ENCODE measurements at regions of chr1 and their contacts with region 1.

Region 1: GRCh38 chr1:171485375-171486047 is at the start of gene PRRC2C:
- DNase-seq: peak; percentile 96
- H3K4me3 Mint-ChIP-seq: peak within 1 kb of the TSS; percentile 95
- H3K27ac Mint-ChIP-seq: peak within 1 kb of the TSS; percentile 100
- H3K4me1 Mint-ChIP-seq: peaks cover 51% of the 10 kb centered on the region
- H3K27me3 Mint-ChIP-seq: no peaks in the 10 kb centered on the region

Region 2: GRCh38 chr1:171470726-171471125 is 14.8 kb before region 1 on chr1:
- CTCF ChIA-PET with region 1: no interaction called
- DNase-seq: no peak
- H3K4me3 Mint-ChIP-seq: no peak overlapping the region
- H3K27ac Mint-ChIP-seq: no peak overlapping the region
- H3K4me1 Mint-ChIP-seq: no peaks in the 10 kb centered on the region
- H3K27me3 Mint-ChIP-seq: no peaks in the 10 kb centered on the region

Region 3: GRCh38 chr1:171515299-171515698 is 29.8 kb after region 1 on chr1:
- CTCF ChIA-PET with region 1: interaction called, 22 read pairs
- DNase-seq: no peak
- H3K4me3 Mint-ChIP-seq: no peak overlapping the region
- H3K27ac Mint-ChIP-seq: no peak overlapping the region
- H3K4me1 Mint-ChIP-seq: peaks cover 40% of the 10 kb centered on the region
- H3K27me3 Mint-ChIP-seq: no peaks in the 10 kb centered on the region

Measured in activated naive CD4-positive, alpha-beta T cell treated with anti-CD3 and anti-CD28 coated beads, Interleukin-2, amount 10 ng/mL, durations not matched to agents 7 days and 5 days (primary cell).